Activated CD8-positive, alpha-beta T cell treated with anti-CD3 and anti-CD28 coated beads, Interleukin-2, amount 10 ng/mL, durations not matched to agents 7 days and 5 days (primary cell): ENCODE measurements at regions of chr13 and their contacts with region 1.

Region 1: DNA sequence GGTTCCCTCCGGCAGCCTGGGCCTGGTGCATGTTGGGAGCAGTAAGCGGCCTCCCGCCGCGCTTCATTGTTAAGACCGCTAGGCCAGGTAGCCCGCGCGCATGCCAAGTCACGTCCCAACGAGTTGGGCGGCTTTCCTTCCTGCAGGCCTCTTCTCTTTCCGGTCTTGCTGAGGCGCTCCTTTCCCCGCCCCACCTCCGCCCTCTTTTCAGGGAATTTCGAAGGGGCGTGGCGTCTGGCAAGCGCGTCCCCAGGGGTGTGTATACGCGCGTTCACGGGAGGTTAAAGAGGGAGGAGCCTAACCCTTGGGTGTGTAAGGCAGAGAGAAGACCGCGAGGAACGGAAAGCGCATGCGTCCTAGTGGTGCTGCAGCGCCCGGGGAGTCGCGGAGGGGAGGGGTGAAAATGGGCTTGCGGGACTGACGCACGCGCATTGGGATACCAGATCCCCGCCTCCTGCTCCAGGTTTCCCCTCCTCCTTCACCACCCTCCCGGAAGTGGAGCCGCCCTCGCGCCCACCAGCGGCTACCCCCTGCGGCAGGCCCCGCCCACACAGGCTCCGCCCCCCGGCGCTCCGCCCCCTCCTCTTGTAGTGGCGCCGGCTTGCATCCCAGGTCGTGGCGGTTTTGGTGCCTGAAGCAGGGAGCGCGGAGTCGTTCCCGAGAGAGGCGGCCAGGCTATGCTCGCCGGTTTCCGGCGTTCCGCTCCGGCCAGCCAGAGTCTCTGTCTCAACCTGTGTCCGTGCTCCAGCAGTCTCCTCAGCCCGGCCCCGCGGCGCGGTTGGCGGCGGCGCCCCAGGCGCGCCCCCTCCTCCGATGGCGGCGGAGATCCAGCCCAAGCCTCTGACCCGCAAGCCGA is at the start of gene WDFY2:
- DNase-seq: peak; percentile 100
- ATAC-seq: peak; percentile 86
- H3K4me3 Mint-ChIP-seq: peak within 1 kb of the TSS; percentile 88
- H3K27ac Mint-ChIP-seq: peak within 1 kb of the TSS; percentile 96
- H3K4me1 Mint-ChIP-seq: peaks cover 36% of the 10 kb centered on the region
- H3K27me3 Mint-ChIP-seq: peaks cover 4% of the 10 kb centered on the region
- total RNA-seq, gene WDFY2: 11.3 TPM

Region 2: DNA sequence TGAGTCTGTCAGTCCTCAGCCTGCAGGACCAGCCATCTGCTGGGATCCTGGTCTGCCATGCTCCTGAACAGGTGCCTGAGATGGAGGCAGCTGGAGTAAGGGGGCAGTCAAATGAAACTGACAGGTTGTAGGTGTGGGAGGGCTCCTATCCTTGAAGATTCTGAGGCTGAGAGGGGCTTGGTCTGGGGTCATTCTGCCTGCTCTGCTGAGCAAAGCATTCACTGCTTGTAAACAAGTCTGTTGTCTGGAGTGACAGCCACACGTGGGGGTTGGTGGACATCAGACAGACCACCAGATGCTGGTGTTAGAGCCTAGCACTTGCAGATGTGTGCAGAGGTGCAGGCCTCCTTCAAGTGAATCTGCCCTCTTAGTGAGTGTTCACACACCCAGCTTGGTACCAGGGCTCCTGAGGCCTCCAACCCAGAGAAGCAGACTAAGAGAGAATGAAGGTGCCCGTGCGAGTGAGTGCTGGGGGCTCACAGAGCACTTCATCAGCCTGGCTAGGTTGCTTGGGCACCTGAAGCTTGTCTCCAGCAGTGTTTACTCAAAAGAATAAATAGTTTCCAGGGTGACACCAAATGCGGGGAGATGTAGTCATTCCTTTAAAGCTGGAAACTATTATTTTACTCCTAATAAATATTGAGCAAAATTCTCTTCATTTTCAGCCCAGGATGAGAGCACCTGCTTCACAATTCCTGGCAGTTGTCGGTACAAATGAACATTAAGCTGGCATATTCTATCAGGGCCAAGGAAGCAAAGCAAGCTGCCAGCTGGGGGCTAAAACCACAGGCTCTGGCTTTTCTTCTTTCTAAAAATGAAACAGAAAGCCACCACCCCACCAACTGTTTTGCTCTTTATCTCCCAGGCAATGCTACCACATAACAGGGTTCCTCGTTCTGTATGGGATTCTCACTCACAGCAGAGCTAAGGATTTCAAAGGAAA is 592.3 kb before region 1 on chr13:
- CTCF ChIA-PET with region 1: no interaction called
- POLR2A ChIA-PET with region 1: no interaction called
- DNase-seq: peak; percentile 70
- ATAC-seq: peak; percentile 88
- H3K4me3 Mint-ChIP-seq: peak overlapping the region; percentile 34
- H3K27ac Mint-ChIP-seq: peak overlapping the region; percentile 69
- H3K4me1 Mint-ChIP-seq: peaks cover 27% of the 10 kb centered on the region
- H3K27me3 Mint-ChIP-seq: no peaks in the 10 kb centered on the region

Region 3: DNA sequence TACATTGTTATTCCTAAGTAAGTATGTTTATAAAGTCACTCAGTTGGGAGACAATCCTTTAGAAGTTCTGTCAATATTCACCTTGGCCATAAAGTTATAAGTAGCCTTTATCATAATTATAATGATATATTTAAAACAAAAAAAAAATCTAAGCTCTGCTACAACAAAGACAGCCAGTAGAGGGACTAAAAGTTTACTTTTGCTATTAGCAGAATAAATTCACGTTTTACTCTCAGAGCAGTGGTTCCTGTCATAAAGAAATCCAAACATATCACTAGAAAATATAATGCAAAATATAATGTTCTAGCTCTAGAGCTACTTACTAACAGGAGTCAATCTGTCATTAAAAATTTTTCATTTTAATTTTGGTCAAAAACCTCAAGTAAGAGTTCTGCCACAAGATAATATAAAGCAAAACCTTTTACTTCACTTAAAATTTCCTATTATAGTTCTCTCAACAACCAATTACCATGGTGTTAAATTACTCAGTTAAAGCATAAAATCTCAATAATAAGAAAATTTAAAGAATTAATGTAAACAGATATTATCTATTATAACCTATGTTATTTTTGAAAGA is 149.0 kb before region 1 on chr13:
- CTCF ChIA-PET with region 1: interaction called, 11 read pairs
- POLR2A ChIA-PET with region 1: no interaction called
- DNase-seq: no peak
- ATAC-seq: no peak
- H3K4me3 Mint-ChIP-seq: no peak overlapping the region
- H3K27ac Mint-ChIP-seq: no peak overlapping the region
- H3K4me1 Mint-ChIP-seq: peaks cover 10% of the 10 kb centered on the region
- H3K27me3 Mint-ChIP-seq: no peaks in the 10 kb centered on the region

Region 4: GRCh38 chr13:51614350-51614786 is 30.3 kb after region 1 on chr13:
- CTCF ChIA-PET with region 1: interaction called, 14 read pairs
- POLR2A ChIA-PET with region 1: interaction called, 3 read pairs
- DNase-seq: peak; percentile 69
- ATAC-seq: peak; percentile 90
- H3K4me3 Mint-ChIP-seq: peak overlapping the region; percentile 77
- H3K27ac Mint-ChIP-seq: peak overlapping the region; percentile 95
- H3K4me1 Mint-ChIP-seq: peaks cover 15% of the 10 kb centered on the region
- H3K27me3 Mint-ChIP-seq: no peaks in the 10 kb centered on the region

Region 5: DNA sequence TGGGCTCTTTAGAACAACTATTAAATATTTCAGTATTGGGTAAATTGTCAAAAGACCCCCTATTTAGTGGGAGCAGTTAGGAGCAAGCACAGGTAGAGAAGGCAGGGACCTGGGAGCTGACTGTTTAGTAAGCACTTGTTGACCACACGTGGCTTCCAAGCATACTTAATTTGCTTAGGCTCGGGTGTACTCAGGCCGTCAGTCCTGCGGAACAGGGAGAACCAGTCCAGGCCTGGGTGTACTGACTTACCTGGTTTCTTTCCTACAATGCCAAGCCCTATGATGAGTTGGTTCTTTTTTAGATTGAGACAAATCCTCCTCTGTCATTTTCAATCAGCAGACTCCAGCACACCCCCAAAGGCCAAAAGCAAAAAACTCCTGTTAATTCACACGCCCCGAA is 90.2 kb after region 1 on chr13:
- CTCF ChIA-PET with region 1: no interaction called
- POLR2A ChIA-PET with region 1: no interaction called
- DNase-seq: no peak
- ATAC-seq: no peak
- H3K4me3 Mint-ChIP-seq: no peak overlapping the region
- H3K27ac Mint-ChIP-seq: no peak overlapping the region
- H3K4me1 Mint-ChIP-seq: no peaks in the 10 kb centered on the region
- H3K27me3 Mint-ChIP-seq: no peaks in the 10 kb centered on the region

Region 6: GRCh38 chr13:51721496-51721895 is 137.4 kb after region 1 on chr13:
- CTCF ChIA-PET with region 1: no interaction called
- POLR2A ChIA-PET with region 1: no interaction called
- DNase-seq: no peak
- ATAC-seq: no peak
- H3K4me3 Mint-ChIP-seq: no peak overlapping the region
- H3K27ac Mint-ChIP-seq: no peak overlapping the region
- H3K4me1 Mint-ChIP-seq: no peaks in the 10 kb centered on the region
- H3K27me3 Mint-ChIP-seq: no peaks in the 10 kb centered on the region